AG04449 (cell line): ENCODE measurements at regions of chr7 and their contacts with region 1.

Region 1: DNA sequence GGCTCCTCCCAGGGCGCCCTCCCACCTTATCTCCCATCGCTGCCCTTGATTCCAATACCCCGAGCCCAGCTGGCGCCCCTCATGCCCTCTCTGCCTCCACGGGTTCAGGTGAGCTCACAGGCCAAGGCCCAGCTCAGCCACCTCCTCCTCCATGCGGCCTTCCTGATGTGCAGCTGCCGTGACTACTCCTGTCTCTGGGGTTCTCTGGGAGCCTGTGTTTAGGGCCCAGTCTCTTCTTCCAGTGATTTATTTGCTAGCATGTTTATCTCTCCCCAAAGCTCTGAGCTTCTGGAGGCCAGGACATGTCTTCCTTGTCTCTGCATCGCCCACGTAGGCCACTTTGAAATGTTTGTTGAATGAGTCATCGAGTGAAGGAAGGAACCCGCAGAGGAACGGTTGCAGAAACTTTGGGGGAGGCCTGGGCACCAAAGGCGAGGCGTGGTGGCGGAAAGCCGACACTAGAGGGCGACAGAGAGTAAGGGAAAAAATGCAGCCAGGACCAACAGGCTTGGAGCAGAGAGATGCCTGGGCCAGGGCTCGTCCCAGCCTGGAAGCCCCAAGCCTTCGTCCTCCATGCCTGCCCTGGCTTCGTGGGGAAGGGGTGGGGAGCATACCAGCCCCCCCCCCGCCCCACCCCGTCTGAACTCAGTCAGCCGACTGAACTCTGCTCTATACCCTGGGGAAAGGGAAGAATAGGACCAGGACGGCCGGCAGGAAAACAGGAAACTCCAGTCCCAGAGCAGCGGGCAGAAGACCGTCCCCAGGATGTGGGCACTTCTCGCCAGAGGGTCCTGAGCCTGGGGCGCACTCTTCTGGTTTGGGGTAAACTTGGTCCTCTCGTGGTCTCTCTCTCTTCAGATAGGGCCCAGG is 10.9 kb upstream of the HSPB1 start:
- DNase-seq: peak; percentile 93
- H3K4me3 ChIP-seq: peak overlapping the region; percentile 36
- CTCF ChIP-seq: peak; percentile 89

Region 2: GRCh38 chr7:76252020-76252419 is 39.6 kb before region 1 on chr7:
- CTCF ChIA-PET with region 1: no interaction called
- POLR2A ChIA-PET with region 1: no interaction called
- DNase-seq: no peak
- H3K4me3 ChIP-seq: no peak overlapping the region
- CTCF ChIP-seq: no peak

Region 3: DNA sequence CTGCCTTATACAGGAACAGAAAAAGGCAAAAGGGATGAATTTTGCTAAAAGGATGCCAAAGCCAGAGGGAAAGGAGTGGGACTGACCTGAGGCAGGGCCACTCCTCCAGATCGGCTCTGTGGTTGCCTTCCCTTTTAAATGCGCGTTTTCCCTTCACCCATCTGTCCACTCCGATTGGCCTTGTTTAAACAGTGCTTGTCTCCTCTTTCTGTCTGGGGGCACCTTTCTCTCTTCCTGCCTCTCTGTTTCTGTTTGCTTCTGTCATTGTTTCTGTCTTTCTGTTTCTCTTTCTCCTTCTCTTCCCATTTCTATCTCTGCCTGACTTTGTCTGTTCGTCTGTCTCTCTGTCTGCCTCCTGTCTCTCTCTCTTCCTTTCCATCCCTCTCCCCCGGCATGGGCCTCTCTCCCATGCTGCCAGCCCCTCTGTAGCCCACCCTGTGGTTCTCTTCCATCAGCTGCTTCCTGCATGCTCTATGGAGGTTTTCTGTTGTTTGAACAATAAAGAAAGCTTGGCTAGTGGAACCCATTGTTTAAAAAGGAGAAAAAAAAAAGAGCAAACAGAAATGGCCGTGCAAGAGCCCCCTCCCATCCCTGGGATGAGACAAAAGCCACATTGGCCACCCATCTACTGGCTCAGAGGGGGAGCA is 18.6 kb before region 1 on chr7:
- CTCF ChIA-PET with region 1: interaction called, 10 read pairs
- POLR2A ChIA-PET with region 1: interaction called, 4 read pairs
- DNase-seq: no peak
- H3K4me3 ChIP-seq: no peak overlapping the region
- CTCF ChIP-seq: no peak

Region 4: DNA sequence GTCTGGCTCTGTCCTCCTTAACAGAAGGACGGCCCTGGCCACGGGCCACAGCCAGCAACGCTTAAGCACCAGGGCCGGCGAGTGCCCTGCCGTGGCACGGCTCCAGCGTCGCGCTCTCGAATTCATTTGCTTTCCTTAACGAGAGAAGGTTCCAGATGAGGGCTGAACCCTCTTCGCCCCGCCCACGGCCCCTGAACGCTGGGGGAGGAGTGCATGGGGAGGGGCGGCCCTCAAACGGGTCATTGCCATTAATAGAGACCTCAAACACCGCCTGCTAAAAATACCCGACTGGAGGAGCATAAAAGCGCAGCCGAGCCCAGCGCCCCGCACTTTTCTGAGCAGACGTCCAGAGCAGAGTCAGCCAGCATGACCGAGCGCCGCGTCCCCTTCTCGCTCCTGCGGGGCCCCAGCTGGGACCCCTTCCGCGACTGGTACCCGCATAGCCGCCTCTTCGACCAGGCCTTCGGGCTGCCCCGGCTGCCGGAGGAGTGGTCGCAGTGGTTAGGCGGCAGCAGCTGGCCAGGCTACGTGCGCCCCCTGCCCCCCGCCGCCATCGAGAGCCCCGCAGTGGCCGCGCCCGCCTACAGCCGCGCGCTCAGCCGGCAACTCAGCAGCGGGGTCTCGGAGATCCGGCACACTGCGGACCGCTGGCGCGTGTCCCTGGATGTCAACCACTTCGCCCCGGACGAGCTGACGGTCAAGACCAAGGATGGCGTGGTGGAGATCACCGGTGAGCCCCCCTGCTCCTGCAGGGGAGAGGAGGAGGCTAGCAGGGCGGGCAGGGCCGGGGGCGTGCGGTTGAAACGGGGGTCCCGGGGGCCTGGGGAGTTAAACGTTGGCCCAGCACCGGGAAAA is 11.0 kb after region 1 on chr7 and contains the start of gene HSPB1:
- CTCF ChIA-PET with region 1: interaction called, 20 read pairs
- POLR2A ChIA-PET with region 1: interaction called, 40 read pairs
- DNase-seq: no peak
- H3K4me3 ChIP-seq: peak within 1 kb of the TSS; percentile 97
- CTCF ChIP-seq: no peak